KBM-7 (cell line): ENCODE measurements at regions of chr1 and their contacts with region 1.

Region 1: DNA sequence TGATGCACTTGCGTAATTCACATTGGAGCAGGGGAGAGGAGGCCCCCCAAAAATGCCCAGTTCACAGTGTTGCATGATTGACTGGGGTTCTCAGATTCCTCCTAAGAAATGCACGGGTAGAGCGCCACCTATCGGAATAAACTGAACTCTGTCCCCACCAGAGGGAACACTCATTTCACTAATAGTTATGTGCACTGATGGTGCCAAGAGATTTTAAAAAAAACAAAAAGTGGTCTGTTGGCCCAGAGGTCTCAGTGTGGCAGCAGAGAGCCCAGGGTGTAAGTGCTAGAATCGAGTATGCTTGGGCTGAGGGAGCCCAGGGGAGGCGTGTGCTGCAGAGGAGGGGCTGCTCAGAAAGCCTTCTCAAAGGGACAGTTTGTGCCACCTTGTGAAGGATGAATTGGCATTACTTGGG is 6.9 kb downstream of the PINK1 start:
- DNase-seq: peak; percentile 62

Region 2: GRCh38 chr1:20511518-20512370 is 128.4 kb before region 1 on chr1:
- in situ Hi-C with region 1: loop called (anchors 10 kb)
- DNase-seq: no peak

Region 3: DNA sequence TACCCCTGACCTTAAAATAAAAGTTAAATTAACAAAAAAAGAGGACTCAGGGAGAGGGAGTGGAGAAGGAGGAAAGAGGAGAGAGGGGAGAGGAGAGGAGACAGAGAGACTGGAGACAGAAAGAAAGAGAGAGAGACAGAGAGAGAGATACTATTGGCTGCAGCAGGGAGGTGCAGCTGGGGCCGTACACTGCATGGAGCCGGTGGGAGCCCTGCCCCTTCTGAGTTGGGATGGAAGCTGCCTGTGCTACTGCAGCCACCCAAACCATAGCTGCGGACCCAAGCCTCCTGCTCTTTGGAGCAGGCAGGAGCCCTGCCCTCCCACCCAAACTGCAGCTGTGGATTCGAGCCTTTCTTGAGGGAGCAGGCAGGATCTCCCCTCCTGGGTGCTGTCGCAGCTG is 179.6 kb after region 1 on chr1:
- in situ Hi-C with region 1: no loop called
- DNase-seq: no peak